ENCODE measurements at regions of chr10 and their contacts with region 1.

Region 1: GRCh38 chr10:123967396-123968243 is 76.0 kb upstream of the CPXM2 start:
- DNase-seq: peak; percentile 81
- ATAC-seq: peak; percentile 61

Region 2: DNA sequence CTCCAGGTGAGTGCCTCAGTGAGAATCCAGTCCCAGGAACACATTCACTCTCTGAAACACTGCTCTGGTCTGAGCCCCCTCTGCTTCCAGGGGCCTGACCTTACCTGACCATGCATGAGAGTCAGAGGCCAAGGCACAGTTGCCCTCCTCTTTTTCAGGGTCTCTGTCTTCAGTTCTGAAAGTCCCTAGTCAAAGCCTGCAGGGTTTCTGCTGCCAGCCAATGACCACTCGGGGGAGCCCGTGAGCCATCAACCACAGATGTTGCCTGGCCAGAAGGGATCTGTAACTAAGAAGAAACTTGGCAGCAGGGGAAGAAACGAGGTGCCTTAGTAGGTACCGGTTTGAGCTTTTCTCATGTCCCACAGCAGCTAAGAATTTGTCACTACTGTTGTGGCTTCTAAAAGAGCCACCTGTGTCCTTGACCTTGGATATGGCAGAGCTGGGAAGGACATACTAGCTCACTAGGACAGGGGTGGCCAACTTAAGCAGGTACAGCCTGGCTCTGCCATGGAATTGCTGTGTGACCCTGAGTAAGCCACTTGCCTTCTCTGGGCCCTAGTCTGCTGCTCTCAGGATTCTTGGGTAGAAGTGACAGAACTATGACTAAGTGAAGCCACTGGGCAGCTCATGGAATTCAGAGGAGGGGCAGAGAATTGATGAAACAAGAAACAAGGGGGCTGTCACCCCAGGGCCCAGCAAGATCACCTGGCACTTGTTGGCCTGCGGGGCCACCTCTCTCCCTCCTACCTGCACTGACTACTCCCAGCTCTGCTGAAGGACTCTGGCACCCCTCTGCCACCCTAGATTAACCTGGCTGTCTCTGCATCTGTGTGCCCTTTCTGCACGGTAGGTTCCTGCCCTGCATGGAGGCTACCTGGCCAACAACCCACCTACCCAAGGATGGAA is 385.3 kb before region 1 on chr10:
- intact Hi-C with region 1: loop called (anchors 1 kb)
- DNase-seq: peak; percentile 79
- ATAC-seq: peak; percentile 56